HCT116 (cell line): ENCODE measurements at regions of chr2 and their contacts with region 1.

Region 1: GRCh38 chr2:223797811-223798721 is 39.3 kb downstream of the AP1S3 start:
- DNase-seq: no peak
- ATAC-seq: peak; percentile 42
- H3K4me3 ChIP-seq: no peak overlapping the region
- H3K27ac ChIP-seq: peak overlapping the region; percentile 79
- H3K4me1 ChIP-seq: peaks cover 87% of the 10 kb centered on the region in 2 experiments
- H3K27me3 ChIP-seq: no peaks in the 10 kb centered on the region
- CTCF ChIP-seq: peak; percentile 52 to 84 (median 83)
- POLR2A ChIP-seq: no peak
- RAD21 ChIP-seq: peak; percentile 93

Region 2: GRCh38 chr2:222976521-222977076 is 821.5 kb before region 1 on chr2:
- CTCF ChIA-PET with region 1: interaction called, 21 read pairs
- POLR2A ChIA-PET with region 1: no interaction called
- RAD21 ChIA-PET with region 1: no interaction called
- intact Hi-C with region 1: loop called (anchors 5 kb)
- DNase-seq: no peak
- ATAC-seq: no peak
- H3K4me3 ChIP-seq: no peak overlapping the region
- H3K27ac ChIP-seq: no peak overlapping the region
- H3K4me1 ChIP-seq: peaks cover 6 to 21% of the 10 kb centered on the region in 2 experiments; a peak in 2 of 4 replicates
- H3K27me3 ChIP-seq: no peaks in the 10 kb centered on the region
- CTCF ChIP-seq: no peak
- POLR2A ChIP-seq: no peak
- RAD21 ChIP-seq: no peak

Region 3: DNA sequence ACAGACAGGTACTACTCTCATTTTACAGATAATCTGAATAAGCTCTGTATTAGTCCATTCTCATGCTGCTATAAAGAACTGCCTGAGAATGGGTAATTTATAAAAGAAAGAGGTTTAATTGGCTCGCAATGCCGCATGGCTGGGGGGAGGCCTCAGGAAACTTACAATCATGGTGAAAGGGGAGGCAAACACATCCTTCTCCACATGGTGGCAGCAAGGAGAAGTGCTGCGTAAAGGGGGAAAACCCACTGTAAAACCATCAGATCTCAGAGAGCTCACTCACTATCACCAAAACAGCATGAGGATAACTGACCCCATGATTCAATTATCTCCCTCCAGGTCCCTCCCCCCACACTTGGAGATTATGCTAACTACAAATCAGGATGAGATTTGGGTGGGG is 491.7 kb before region 1 on chr2:
- CTCF ChIA-PET with region 1: no interaction called
- POLR2A ChIA-PET with region 1: no interaction called
- RAD21 ChIA-PET with region 1: no interaction called
- intact Hi-C with region 1: loop called (anchors 5 kb)
- DNase-seq: peak; percentile 28
- ATAC-seq: peak; percentile 83
- H3K4me3 ChIP-seq: no peak overlapping the region
- H3K27ac ChIP-seq: no peak overlapping the region
- H3K4me1 ChIP-seq: no peaks in the 10 kb centered on the region
- H3K27me3 ChIP-seq: no peaks in the 10 kb centered on the region
- CTCF ChIP-seq: peak; percentile 25 to 60 (median 57); a peak in 5 of 6 replicates
- POLR2A ChIP-seq: no peak
- RAD21 ChIP-seq: peak; percentile 63

Region 4: DNA sequence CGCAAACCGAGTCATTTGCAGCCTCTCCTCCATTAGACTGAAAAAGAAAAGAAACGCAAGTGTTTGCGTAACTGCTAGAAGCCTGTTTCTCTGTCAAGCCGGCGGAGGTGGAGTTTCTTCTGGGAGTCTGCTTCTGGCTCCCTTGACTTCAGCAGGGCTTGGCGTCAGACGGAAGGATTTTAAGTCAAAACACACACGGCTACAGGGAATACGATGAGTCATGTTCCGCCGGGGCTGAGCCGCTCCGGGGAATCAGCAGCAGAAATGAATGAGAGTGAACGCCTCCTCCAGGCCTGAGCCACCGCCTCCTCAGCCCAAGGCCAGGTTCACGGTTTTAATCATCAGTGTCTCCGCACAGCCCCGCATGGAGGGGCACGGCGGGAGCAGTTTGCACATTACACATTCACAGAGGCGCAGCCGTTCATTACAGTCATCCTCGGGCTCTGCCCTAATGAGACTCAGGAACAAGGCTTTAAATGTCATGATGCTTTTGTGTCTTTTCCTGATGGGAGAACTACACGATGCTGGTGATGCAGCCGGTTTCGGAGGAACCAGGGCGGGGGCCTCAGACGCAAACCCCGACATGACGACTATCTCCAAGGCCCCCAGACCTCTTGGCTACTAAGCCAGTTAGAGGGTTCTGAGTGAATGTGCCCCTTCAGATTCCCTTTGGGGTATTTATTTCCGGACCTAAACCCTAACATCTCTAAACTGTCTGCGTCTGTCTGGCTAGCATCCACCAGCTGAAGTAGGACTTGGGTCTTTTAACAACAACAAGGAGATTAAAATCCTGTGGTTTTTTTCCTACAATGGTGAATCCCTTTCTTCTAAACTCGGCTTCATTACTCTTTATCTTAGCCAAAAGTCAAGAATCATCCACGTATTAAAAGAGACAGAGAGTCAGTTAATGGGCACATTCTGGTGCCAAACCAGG is 184.8 kb before region 1 on chr2:
- CTCF ChIA-PET with region 1: interaction called, 3 read pairs
- POLR2A ChIA-PET with region 1: no interaction called
- RAD21 ChIA-PET with region 1: no interaction called
- intact Hi-C with region 1: loop called (anchors 5 kb)
- DNase-seq: peak; percentile 89
- ATAC-seq: peak; percentile 97
- H3K4me3 ChIP-seq: peak overlapping the region; percentile 24 to 53
- H3K27ac ChIP-seq: peak overlapping the region; percentile 83
- H3K4me1 ChIP-seq: peaks cover 30 to 46% of the 10 kb centered on the region in 2 experiments
- H3K27me3 ChIP-seq: no peaks in the 10 kb centered on the region
- CTCF ChIP-seq: no peak
- POLR2A ChIP-seq: no peak
- RAD21 ChIP-seq: peak; percentile 49

Region 5: DNA sequence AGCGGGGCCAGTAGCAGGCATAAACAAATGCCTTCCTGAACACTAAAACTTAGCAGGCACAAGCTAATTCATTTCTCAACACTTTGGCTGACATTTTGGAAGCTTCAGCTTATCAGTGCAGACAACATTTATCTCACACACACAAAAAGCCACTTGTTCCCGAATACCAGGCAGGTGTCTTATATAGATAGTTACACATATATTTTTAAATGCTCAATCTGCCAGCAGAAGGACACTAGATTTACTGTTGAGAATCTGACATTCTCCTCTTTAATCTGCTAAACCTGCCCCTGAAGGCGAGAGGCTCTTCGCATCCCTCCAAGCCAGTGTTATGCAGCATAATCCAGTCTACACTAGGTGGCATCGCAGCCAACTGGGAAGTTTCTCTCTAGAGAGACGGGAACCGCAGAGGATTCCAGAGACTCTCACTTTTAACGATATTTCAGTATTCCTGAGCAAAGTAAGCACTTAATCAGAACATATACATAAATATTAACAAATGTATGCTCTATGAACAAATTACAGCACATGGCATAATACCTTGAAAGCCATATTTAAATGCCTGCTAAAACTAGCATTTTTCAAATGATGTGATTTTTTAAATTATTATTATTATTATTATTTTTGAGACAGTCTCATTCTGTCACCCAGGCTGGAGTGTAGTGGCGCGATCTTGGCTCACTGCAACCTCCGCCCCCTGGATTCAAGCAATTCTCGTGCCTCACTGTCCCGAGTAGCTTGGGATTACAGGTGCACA is 105.7 kb before region 1 on chr2:
- CTCF ChIA-PET with region 1: interaction called, 7 read pairs
- POLR2A ChIA-PET with region 1: interaction called, 6 read pairs
- RAD21 ChIA-PET with region 1: interaction called in 1 of 2 experiments, 3 read pairs
- intact Hi-C with region 1: loop called (anchors 2 kb)
- DNase-seq: peak; percentile 59
- ATAC-seq: peak; percentile 85
- H3K4me3 ChIP-seq: no peak overlapping the region
- H3K27ac ChIP-seq: peak overlapping the region; percentile 4; the same call in 1 of the 2 replicates
- H3K4me1 ChIP-seq: peaks cover 34 to 51% of the 10 kb centered on the region in 2 experiments
- H3K27me3 ChIP-seq: no peaks in the 10 kb centered on the region
- CTCF ChIP-seq: peak; percentile 71 to 77 (median 72)
- POLR2A ChIP-seq: no peak
- RAD21 ChIP-seq: peak; percentile 86

Region 6: DNA sequence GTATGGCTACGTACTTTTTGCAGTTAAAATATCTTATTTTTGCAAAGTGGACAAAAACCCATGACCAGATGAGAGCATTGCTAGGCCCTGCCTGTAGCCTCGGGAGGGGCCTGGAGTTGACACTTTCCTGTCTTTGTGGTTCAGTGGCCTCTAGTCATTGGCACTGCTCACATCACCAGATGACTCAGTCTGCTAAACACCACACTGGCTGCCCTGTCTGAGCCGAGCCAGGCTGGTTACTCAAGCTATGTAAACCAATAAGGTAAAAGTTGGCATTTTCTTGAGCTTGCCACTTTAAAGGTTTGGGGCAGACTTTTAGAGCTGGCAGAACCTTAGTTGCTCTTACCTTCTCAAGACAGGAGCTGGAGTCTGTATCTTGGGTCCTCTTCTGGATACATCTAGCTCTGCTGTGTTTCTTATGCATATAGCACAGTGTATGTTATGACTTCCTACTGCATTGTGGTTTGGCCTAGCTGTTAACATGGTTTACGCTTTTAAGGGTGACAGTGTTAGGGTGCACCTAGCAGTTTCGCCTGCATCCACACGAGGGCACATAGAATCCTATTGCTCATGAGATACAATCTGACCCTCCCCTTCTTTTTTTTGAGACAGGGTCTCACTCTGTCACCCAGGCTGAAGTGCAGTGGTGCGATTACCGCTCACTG is 37.1 kb before region 1 on chr2:
- CTCF ChIA-PET with region 1: interaction called, 23 read pairs
- POLR2A ChIA-PET with region 1: interaction called, 13 read pairs
- RAD21 ChIA-PET with region 1: interaction called, 5 read pairs
- intact Hi-C with region 1: no loop called
- DNase-seq: peak; percentile 96
- ATAC-seq: peak; percentile 90
- H3K4me3 ChIP-seq: 0 out of 4 replicates have a peak overlapping the region, but pooled peaks of 1 of the 2 experiments have one; percentile 23
- H3K27ac ChIP-seq: peak overlapping the region; percentile 91
- H3K4me1 ChIP-seq: peaks cover 56 to 63% of the 10 kb centered on the region in 2 experiments
- H3K27me3 ChIP-seq: no peaks in the 10 kb centered on the region
- CTCF ChIP-seq: peak in 2 of 3 experiments; percentile 56 to 59; a peak in 4 of 6 replicates
- POLR2A ChIP-seq: no peak
- RAD21 ChIP-seq: peak; percentile 49

Region 7: GRCh38 chr2:223860809-223861738 is 63.0 kb after region 1 on chr2:
- CTCF ChIA-PET with region 1: interaction called, 15 read pairs
- POLR2A ChIA-PET with region 1: interaction called, 4 read pairs
- RAD21 ChIA-PET with region 1: interaction called in 1 of 2 experiments, 3 read pairs
- intact Hi-C with region 1: no loop called
- DNase-seq: peak; percentile 82
- ATAC-seq: peak; percentile 86
- H3K4me3 ChIP-seq: peak overlapping the region in 1 of 2 experiments; percentile 42; a peak in 2 of 4 replicates
- H3K27ac ChIP-seq: peak overlapping the region; percentile 92
- H3K4me1 ChIP-seq: peaks cover 50 to 62% of the 10 kb centered on the region in 2 experiments
- H3K27me3 ChIP-seq: no peaks in the 10 kb centered on the region
- CTCF ChIP-seq: peak; percentile 13 to 25 (median 14); a peak in 3 of 6 replicates
- POLR2A ChIP-seq: no peak
- RAD21 ChIP-seq: peak; percentile 41